AG04450 (cell line): ENCODE measurements at regions of chr1 and their contacts with region 1.

Region 1: DNA sequence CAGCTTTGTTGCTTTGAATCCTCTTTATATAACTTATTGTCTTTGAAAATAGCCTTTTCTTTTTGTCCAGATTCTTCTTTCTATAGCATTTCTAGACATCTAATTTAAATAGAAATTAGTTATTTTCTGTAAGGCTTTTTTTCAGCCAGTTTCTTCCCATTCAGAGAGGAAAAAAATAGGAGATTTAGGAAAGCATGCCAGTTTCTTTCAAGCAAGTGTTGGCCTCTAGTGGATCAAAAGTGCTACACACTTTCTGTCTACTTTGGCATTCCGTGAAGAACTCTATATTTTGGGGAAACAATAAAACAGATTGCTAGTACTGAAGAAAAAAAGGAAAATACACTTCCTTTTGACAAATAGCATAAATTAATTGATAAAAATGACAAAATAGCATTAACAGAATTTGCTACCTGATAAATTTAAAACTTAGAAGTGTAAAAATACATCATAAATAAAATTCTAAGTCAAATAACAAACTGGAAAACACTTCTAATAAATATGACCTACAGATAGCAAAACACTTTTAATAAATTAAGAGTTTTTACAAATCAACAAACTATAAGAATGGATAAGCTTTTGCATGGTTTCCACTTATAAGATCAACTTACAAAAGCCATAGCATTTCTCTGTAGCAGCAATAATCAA is 13.1 kb upstream of the EXO1 start:
- DNase-seq: peak; percentile 32
- H3K4me3 ChIP-seq: no peak overlapping the region
- H3K27ac ChIP-seq: no peak overlapping the region
- H3K27me3 ChIP-seq: no peaks in the 10 kb centered on the region
- CTCF ChIP-seq: peak; percentile 85

Region 2: DNA sequence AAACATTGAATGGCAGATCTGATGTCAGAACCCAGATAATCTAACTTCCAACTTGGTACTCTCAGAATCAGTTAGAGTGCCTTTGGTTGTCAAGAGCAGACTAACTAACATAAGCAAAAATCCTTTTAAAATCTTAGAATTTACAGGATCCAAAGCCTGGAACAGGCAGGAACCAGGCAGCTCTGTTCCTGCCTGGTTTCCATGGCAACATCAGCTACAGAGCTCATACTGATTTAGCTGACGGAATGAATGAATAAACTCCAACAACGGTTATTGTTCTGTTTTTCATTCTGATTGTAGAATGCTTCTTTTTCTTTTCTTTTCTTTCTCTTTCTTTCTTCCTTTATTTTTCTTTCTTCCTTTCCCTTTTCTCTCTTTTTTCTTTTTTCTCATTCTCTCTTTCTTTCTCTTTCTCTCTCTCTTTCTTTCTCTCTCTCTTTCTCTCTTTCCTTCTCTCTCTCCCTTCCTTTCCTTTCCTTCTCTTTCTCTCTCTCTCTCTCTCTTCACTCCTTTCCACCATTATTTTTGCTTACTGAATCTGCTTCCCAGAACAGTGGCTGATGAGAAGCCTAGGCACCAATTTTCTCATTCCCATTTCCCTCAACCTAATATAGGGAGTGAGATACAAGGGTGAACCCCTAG is 599.5 kb before region 1 on chr1:
- CTCF ChIA-PET with region 1: no interaction called
- POLR2A ChIA-PET with region 1: no interaction called
- DNase-seq: no peak
- H3K4me3 ChIP-seq: no peak overlapping the region
- H3K27ac ChIP-seq: no peak overlapping the region
- H3K27me3 ChIP-seq: no peaks in the 10 kb centered on the region
- CTCF ChIP-seq: no peak

Region 3: DNA sequence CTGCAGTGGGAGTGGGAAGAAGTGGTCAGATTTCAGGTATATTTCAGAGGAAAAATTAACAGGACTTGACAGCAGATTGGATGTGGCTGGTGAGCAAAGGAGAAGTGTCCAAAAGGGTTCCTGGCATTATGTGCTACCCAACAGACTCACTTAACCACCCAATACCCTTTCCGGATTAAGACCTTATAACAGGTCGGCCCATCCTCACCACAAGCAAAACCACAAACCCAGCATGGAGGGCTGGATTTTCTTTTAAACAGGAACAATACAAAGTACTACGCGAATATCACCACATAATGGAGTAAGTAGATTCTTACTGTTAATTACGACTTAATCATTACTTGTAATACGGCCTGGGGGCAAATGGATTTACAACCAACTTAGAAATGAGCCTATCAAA is 123.5 kb before region 1 on chr1:
- CTCF ChIA-PET with region 1: no interaction called
- POLR2A ChIA-PET with region 1: no interaction called
- DNase-seq: no peak
- H3K4me3 ChIP-seq: no peak overlapping the region
- H3K27ac ChIP-seq: no peak overlapping the region
- H3K27me3 ChIP-seq: no peaks in the 10 kb centered on the region
- CTCF ChIP-seq: no peak

Region 4: DNA sequence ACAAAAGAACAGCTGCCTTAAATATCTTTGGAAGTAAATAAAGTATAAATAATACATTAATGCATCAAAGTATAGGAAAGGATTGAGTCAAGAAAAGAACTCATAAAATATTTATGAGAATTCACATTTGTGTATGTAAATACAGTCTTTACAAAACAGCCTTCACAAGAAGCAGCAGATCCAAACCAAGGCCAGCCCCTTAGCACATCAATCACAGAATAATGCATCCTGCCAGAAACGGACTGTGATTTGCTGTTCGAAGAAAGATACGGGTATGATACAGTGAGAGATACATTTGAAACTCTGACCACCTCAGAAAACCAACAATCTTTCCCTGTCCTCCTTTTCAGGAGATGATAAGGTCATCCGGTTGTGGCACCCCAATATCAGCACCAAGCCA is 111.9 kb before region 1 on chr1:
- CTCF ChIA-PET with region 1: no interaction called
- POLR2A ChIA-PET with region 1: no interaction called
- DNase-seq: no peak
- H3K4me3 ChIP-seq: no peak overlapping the region
- H3K27ac ChIP-seq: no peak overlapping the region
- H3K27me3 ChIP-seq: no peaks in the 10 kb centered on the region
- CTCF ChIP-seq: no peak

Region 5: GRCh38 chr1:241817261-241817792 is 17.5 kb before region 1 on chr1:
- CTCF ChIA-PET with region 1: interaction called, 13 read pairs
- POLR2A ChIA-PET with region 1: interaction called, 5 read pairs
- DNase-seq: peak; percentile 69
- H3K4me3 ChIP-seq: no peak overlapping the region
- H3K27ac ChIP-seq: peak overlapping the region; percentile 63
- H3K27me3 ChIP-seq: no peaks in the 10 kb centered on the region
- CTCF ChIP-seq: no peak